AG04450 (cell line): ENCODE measurements at regions of chr1 and their contacts with region 1.

Region 1: GRCh38 chr1:147389532-147390524 is 147.3 kb downstream of the CHD1L start:
- DNase-seq: peak; percentile 27
- H3K4me3 ChIP-seq: no peak overlapping the region
- H3K27ac ChIP-seq: no peak overlapping the region
- H3K27me3 ChIP-seq: no peaks in the 10 kb centered on the region
- CTCF ChIP-seq: peak; percentile 87

Region 2: GRCh38 chr1:147417028-147417427 is 27.2 kb after region 1 on chr1:
- CTCF ChIA-PET with region 1: interaction called, 12 read pairs
- POLR2A ChIA-PET with region 1: no interaction called
- DNase-seq: no peak
- H3K4me3 ChIP-seq: no peak overlapping the region
- H3K27ac ChIP-seq: no peak overlapping the region
- H3K27me3 ChIP-seq: no peaks in the 10 kb centered on the region
- CTCF ChIP-seq: no peak